ENCODE measurements at regions of chr4 and their contacts with region 1.

Region 1: GRCh38 chr4:83284193-83285054 is at the start of gene COQ2:
- DNase-seq: peak; percentile 97
- H3K4me3 Mint-ChIP-seq: peak within 1 kb of the TSS; percentile 92
- H3K27ac Mint-ChIP-seq: peak within 1 kb of the TSS; percentile 99
- H3K4me1 Mint-ChIP-seq: peaks cover 50% of the 10 kb centered on the region
- H3K27me3 Mint-ChIP-seq: no peaks in the 10 kb centered on the region

Region 2: DNA sequence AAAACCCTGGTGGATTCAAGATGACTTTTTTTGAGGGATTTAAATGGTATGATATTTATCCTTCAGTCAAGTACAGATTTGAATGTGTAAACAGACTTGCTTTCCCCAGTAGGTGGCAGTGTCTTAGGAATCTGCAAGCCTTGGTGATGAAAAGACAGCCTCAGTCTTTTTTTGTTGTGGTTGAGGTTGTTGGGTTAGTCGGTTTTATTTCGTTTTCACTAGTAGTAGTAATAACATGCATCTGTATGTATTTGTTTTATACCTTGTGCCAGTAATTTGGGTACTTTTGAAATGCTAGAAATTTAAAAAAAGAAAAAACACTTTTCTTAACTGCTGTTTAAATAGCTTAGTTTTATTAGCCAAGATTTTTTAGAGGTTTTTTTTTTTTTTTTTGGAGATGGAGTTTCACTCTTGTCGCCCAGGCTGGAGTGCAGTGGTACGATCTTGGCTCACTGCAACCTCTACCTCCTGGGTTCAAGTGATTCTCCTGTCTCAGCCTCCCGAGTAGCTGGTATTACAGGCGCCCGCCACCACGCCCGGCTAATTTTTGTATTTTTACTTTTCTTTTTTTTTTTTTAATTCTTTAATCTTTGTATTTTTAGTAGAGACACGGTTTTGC is 210.2 kb before region 1 on chr4:
- CTCF ChIA-PET with region 1: interaction called, 12 read pairs
- DNase-seq: peak; percentile 70
- H3K4me3 Mint-ChIP-seq: peak overlapping the region; percentile 45
- H3K27ac Mint-ChIP-seq: peak overlapping the region; percentile 74
- H3K4me1 Mint-ChIP-seq: peaks cover 18% of the 10 kb centered on the region
- H3K27me3 Mint-ChIP-seq: no peaks in the 10 kb centered on the region

Region 3: DNA sequence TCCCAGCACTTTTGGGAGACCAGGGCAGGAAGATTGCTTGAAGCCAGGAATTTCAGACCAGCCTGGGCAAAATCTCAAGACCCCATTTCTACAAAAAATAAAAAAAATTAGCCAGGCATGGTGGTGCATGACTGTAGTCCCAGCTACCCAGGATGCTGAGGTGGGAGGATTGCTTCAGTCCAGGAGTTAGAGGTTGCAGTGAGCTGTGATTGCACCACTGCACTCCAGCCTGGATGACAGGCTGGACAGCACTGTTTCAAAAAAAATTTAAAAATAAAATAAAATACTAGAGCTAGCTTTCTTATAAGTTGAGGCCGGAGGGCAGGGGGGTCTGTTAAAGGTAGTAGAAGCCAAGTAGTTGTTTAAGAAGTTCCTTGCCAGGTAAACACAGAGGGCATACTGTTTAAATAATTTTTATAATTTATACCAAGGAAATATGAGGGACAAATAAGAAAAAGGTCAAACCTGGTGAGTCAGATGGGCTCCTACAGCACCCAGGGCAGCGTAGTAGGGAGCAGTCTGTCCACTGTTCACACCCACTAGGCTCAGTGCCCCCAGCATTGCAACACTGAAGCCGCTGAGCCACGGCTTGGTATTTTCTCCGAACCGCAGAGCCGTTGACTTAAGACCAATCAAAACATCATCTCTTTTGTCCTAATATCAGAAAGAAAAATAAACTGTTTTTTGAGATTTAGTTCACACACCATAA is 17.1 kb before region 1 on chr4:
- CTCF ChIA-PET with region 1: interaction called, 33 read pairs
- DNase-seq: no peak
- H3K4me3 Mint-ChIP-seq: no peak overlapping the region
- H3K27ac Mint-ChIP-seq: no peak overlapping the region
- H3K4me1 Mint-ChIP-seq: peaks cover 6% of the 10 kb centered on the region
- H3K27me3 Mint-ChIP-seq: no peaks in the 10 kb centered on the region

Region 4: DNA sequence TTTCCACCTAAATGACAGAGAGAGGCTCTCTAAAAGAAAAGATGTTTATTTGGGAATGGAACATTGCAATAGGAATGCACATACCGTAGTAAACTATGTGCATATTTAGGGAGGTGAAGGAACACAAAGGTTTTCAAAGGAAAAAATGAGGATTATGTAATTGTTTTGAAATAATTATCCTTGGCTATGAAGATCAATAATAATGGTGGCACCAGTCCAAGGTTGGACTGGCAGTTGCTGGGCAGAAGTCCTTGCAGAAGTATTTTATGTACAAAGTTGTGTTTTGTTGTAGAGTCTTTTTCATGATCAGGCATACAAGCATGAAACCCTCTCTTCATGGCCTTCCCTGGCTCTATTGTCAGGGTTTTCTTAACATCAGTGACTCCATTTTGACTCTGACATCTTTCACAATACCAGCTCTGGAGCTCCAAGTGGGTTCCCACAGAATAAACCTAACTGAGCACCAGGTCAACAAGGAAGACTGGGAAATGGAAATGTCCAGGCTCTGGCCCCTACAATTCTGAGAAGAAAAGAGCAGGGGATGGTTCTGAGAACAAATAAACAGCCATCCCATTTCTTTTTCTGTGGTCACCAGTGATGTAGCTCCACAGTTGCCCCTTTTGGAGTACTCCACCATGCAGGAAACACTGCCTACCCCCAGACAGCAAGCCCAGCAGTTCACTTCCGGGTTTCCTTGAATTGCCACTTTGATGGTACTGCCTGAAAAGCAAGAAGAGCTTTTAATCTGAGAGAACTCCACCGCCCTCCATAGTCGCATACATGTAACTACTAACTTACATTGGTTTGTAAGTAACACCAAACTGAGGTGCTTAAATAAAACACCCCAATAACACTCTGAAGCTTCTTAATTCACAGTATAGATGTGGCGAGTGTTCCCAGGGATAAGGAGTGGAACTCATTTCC is 103.6 kb after region 1 on chr4:
- CTCF ChIA-PET with region 1: interaction called, 43 read pairs
- DNase-seq: peak; percentile 70
- H3K4me3 Mint-ChIP-seq: no peak overlapping the region
- H3K27ac Mint-ChIP-seq: peak overlapping the region; percentile 70
- H3K4me1 Mint-ChIP-seq: peaks cover 21% of the 10 kb centered on the region
- H3K27me3 Mint-ChIP-seq: peaks cover 13% of the 10 kb centered on the region

Region 5: GRCh38 chr4:83561381-83561780 is 277.0 kb after region 1 on chr4:
- CTCF ChIA-PET with region 1: no interaction called
- DNase-seq: no peak
- H3K4me3 Mint-ChIP-seq: no peak overlapping the region
- H3K27ac Mint-ChIP-seq: no peak overlapping the region
- H3K4me1 Mint-ChIP-seq: peaks cover 9% of the 10 kb centered on the region
- H3K27me3 Mint-ChIP-seq: peaks cover 5% of the 10 kb centered on the region

Measured in activated naive CD4-positive, alpha-beta T cell treated with anti-CD3 and anti-CD28 coated beads, Interleukin-2, amount 10 ng/mL, durations not matched to agents 7 days and 5 days (primary cell).